ENCODE measurements at regions of chr14 and their contacts with region 1.

Region 1: DNA sequence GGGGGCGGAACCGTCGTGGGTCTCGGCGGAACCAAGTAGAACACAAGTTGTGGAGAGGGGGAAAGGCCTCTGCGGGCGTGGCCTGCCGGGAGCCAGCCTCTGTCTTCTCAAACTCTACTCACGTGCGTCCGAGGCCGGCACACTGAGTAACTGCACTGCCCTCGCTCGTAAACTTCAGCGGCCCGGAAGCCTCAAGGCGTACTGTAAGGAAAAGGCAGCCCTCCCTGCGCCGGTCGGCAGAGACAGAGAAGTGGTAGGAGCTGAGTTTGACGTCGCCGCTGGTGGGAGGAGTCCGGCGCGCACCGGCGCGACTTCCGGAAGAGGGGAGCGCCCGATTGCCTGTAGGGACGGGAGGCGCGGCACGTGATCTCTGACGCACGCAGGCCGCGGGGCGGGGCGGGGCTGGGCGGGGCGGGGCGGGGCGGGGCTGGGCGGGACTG is at the start of gene FBXO33:
- DNase-seq: peak; percentile 96
- H3K4me3 Mint-ChIP-seq: peak within 1 kb of the TSS; percentile 100
- H3K27ac Mint-ChIP-seq: peak within 1 kb of the TSS; percentile 100
- H3K4me1 Mint-ChIP-seq: peaks cover 35% of the 10 kb centered on the region
- H3K27me3 Mint-ChIP-seq: no peaks in the 10 kb centered on the region
- total RNA-seq, gene FBXO33: 16.1 to 16.4 TPM

Region 2: DNA sequence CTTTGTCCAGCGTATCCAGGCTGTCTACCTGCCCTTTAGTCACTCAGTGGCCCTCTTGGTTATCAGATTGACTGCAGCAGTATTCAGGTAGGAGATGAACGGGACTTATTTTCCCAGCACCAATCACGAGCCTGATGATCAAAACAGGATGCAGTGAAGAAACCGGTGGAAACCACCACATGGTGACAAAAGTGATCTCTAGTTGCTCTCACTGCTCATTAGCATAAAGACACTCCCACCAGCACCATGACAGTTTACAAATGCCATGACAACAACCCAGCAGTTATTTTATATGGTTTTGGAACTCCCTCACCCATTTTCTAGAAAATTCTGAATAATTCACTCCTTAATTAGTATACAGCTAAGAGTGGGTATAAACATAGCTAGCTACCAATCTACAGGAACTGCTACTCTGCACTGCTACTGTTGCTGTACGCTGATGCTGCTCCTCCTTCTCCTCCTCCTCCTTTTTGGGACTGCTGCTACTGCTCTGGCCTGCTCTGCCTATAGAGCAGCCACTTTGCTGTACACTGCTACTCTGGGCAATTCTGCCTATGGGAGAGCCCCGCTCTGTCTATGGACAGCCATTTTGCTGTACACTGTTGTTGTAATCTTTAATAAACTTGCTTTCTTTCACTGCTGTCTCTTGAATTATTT is 1367.0 kb before region 1 on chr14:
- CTCF ChIA-PET with region 1: no interaction called
- intact Hi-C with region 1: loop called (anchors 1 kb)
- DNase-seq: peak; percentile 81
- H3K4me3 Mint-ChIP-seq: peak overlapping the region; percentile 70
- H3K27ac Mint-ChIP-seq: peak overlapping the region; percentile 87
- H3K4me1 Mint-ChIP-seq: peaks cover 31% of the 10 kb centered on the region
- H3K27me3 Mint-ChIP-seq: no peaks in the 10 kb centered on the region

Region 3: GRCh38 chr14:39114073-39114838 is 317.9 kb before region 1 on chr14 and contains the start of gene GEMIN2:
- CTCF ChIA-PET with region 1: no interaction called
- intact Hi-C with region 1: loop called (anchors 1 kb)
- DNase-seq: peak; percentile 96
- H3K4me3 Mint-ChIP-seq: peak within 1 kb of the TSS; percentile 94
- H3K27ac Mint-ChIP-seq: peak within 1 kb of the TSS; percentile 90
- H3K4me1 Mint-ChIP-seq: peaks cover 23% of the 10 kb centered on the region
- H3K27me3 Mint-ChIP-seq: no peaks in the 10 kb centered on the region
- total RNA-seq, gene GEMIN2: 20.7 to 22.7 TPM

Region 4: GRCh38 chr14:39232554-39233415 is 199.4 kb before region 1 on chr14:
- CTCF ChIA-PET with region 1: interaction called, 33 read pairs
- intact Hi-C with region 1: loop called (anchors 1 kb)
- DNase-seq: no peak
- H3K4me3 Mint-ChIP-seq: no peak overlapping the region
- H3K27ac Mint-ChIP-seq: no peak overlapping the region
- H3K4me1 Mint-ChIP-seq: peaks cover 38% of the 10 kb centered on the region
- H3K27me3 Mint-ChIP-seq: no peaks in the 10 kb centered on the region

Region 5: GRCh38 chr14:39383026-39383660 is 49.1 kb before region 1 on chr14:
- CTCF ChIA-PET with region 1: interaction called, 8 read pairs
- intact Hi-C with region 1: loop called (anchors 1 kb)
- DNase-seq: no peak
- H3K4me3 Mint-ChIP-seq: no peak overlapping the region
- H3K27ac Mint-ChIP-seq: no peak overlapping the region
- H3K4me1 Mint-ChIP-seq: peaks cover 22% of the 10 kb centered on the region
- H3K27me3 Mint-ChIP-seq: no peaks in the 10 kb centered on the region

Region 6: GRCh38 chr14:39446131-39446744 is 14.0 kb after region 1 on chr14:
- CTCF ChIA-PET with region 1: interaction called, 5 read pairs
- intact Hi-C with region 1: loop called (anchors 1 kb)
- DNase-seq: no peak
- H3K4me3 Mint-ChIP-seq: no peak overlapping the region
- H3K27ac Mint-ChIP-seq: no peak overlapping the region
- H3K4me1 Mint-ChIP-seq: peaks cover 39% of the 10 kb centered on the region
- H3K27me3 Mint-ChIP-seq: no peaks in the 10 kb centered on the region